Caco-2 (cell line): ENCODE measurements at regions of chr3 and their contacts with region 1.

Region 1: DNA sequence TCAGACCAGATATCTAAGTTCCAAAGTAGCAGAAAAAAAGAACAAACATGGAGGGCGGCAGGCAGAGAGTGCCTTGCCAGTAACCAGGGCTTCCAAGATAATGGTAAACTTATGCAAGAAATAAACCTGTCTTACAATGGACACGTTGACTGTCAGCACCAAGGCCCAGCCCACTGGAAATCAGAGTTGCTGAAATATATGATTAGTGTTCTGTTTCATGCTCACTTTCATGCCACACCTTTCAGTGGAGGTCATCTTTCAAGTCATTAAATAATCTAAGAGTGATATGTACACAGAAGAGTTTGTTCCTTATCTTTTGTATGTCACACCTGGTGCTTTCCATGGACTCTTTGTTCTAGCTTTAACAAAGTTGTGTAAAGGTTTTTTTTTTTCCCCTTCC is 358.1 kb downstream of the MECOM start:
- DNase-seq: peak; percentile 76 to 85
- H3K4me3 ChIP-seq: no peak overlapping the region
- H3K4me3 Mint-ChIP-seq: peak overlapping the region; percentile 20
- H3K27ac Mint-ChIP-seq: peak overlapping the region; percentile 44
- H3K4me1 ChIP-seq: peaks cover 27% of the 10 kb centered on the region
- H3K4me1 Mint-ChIP-seq: peaks cover 13% of the 10 kb centered on the region
- H3K27me3 ChIP-seq: no peaks in the 10 kb centered on the region
- H3K27me3 Mint-ChIP-seq: no peaks in the 10 kb centered on the region
- CTCF ChIP-seq: no peak

Region 2: GRCh38 chr3:169286214-169286613 is 19.2 kb before region 1 on chr3:
- CTCF ChIA-PET with region 1: no interaction called
- POLR2A ChIA-PET with region 1: no interaction called
- intact Hi-C with region 1: loop called (anchors 1 kb)
- DNase-seq: no peak
- H3K4me3 ChIP-seq: no peak overlapping the region
- H3K4me3 Mint-ChIP-seq: no peak overlapping the region
- H3K27ac Mint-ChIP-seq: no peak overlapping the region
- H3K4me1 ChIP-seq: peaks cover 24% of the 10 kb centered on the region
- H3K4me1 Mint-ChIP-seq: peaks cover 26% of the 10 kb centered on the region
- H3K27me3 ChIP-seq: no peaks in the 10 kb centered on the region
- H3K27me3 Mint-ChIP-seq: no peaks in the 10 kb centered on the region
- CTCF ChIP-seq: no peak

Region 3: GRCh38 chr3:169323578-169324451 is 18.4 kb after region 1 on chr3:
- CTCF ChIA-PET with region 1: no interaction called
- POLR2A ChIA-PET with region 1: no interaction called
- intact Hi-C with region 1: loop called (anchors 2 kb)
- DNase-seq: no peak
- H3K4me3 ChIP-seq: no peak overlapping the region
- H3K4me3 Mint-ChIP-seq: no peak overlapping the region
- H3K27ac Mint-ChIP-seq: no peak overlapping the region
- H3K4me1 ChIP-seq: peaks cover 23% of the 10 kb centered on the region
- H3K4me1 Mint-ChIP-seq: peaks cover 15% of the 10 kb centered on the region
- H3K27me3 ChIP-seq: no peaks in the 10 kb centered on the region
- H3K27me3 Mint-ChIP-seq: no peaks in the 10 kb centered on the region
- CTCF ChIP-seq: no peak

Region 4: GRCh38 chr3:169362301-169362700 is 56.8 kb after region 1 on chr3:
- CTCF ChIA-PET with region 1: no interaction called
- POLR2A ChIA-PET with region 1: no interaction called
- intact Hi-C with region 1: no loop called
- DNase-seq: no peak
- H3K4me3 ChIP-seq: no peak overlapping the region
- H3K4me3 Mint-ChIP-seq: no peak overlapping the region
- H3K27ac Mint-ChIP-seq: no peak overlapping the region
- H3K4me1 ChIP-seq: no peaks in the 10 kb centered on the region
- H3K4me1 Mint-ChIP-seq: no peaks in the 10 kb centered on the region
- H3K27me3 ChIP-seq: no peaks in the 10 kb centered on the region
- H3K27me3 Mint-ChIP-seq: no peaks in the 10 kb centered on the region
- CTCF ChIP-seq: no peak

Region 5: GRCh38 chr3:169662132-169662842 is 356.8 kb after region 1 on chr3:
- CTCF ChIA-PET with region 1: no interaction called
- POLR2A ChIA-PET with region 1: no interaction called
- intact Hi-C with region 1: loop called (anchors 2 kb)
- DNase-seq: peak; percentile 83 to 92
- H3K4me3 ChIP-seq: peak overlapping the region; percentile 54
- H3K4me3 Mint-ChIP-seq: peak overlapping the region; percentile 87
- H3K27ac Mint-ChIP-seq: no peak overlapping the region
- H3K4me1 ChIP-seq: peaks cover 3% of the 10 kb centered on the region; the same call in 1 of the 2 replicates
- H3K4me1 Mint-ChIP-seq: no peaks in the 10 kb centered on the region
- H3K27me3 ChIP-seq: peaks cover 3% of the 10 kb centered on the region
- H3K27me3 Mint-ChIP-seq: peaks cover 11% of the 10 kb centered on the region
- CTCF ChIP-seq: peak; percentile 73 to 77

Region 6: GRCh38 chr3:169744366-169745054 is 439.1 kb after region 1 on chr3:
- CTCF ChIA-PET with region 1: no interaction called
- POLR2A ChIA-PET with region 1: no interaction called
- intact Hi-C with region 1: no loop called
- DNase-seq: no peak
- H3K4me3 ChIP-seq: no peak overlapping the region
- H3K4me3 Mint-ChIP-seq: no peak overlapping the region
- H3K27ac Mint-ChIP-seq: no peak overlapping the region
- H3K4me1 ChIP-seq: peaks cover 12% of the 10 kb centered on the region; the same call in 1 of the 2 replicates
- H3K4me1 Mint-ChIP-seq: peaks cover 8% of the 10 kb centered on the region
- H3K27me3 ChIP-seq: no peaks in the 10 kb centered on the region
- H3K27me3 Mint-ChIP-seq: peaks cover 2% of the 10 kb centered on the region
- CTCF ChIP-seq: peak; percentile 30 to 31